CD8-positive, alpha-beta T cell (primary cell): ENCODE measurements at regions of chr17 and their contacts with region 1.

Region 1: DNA sequence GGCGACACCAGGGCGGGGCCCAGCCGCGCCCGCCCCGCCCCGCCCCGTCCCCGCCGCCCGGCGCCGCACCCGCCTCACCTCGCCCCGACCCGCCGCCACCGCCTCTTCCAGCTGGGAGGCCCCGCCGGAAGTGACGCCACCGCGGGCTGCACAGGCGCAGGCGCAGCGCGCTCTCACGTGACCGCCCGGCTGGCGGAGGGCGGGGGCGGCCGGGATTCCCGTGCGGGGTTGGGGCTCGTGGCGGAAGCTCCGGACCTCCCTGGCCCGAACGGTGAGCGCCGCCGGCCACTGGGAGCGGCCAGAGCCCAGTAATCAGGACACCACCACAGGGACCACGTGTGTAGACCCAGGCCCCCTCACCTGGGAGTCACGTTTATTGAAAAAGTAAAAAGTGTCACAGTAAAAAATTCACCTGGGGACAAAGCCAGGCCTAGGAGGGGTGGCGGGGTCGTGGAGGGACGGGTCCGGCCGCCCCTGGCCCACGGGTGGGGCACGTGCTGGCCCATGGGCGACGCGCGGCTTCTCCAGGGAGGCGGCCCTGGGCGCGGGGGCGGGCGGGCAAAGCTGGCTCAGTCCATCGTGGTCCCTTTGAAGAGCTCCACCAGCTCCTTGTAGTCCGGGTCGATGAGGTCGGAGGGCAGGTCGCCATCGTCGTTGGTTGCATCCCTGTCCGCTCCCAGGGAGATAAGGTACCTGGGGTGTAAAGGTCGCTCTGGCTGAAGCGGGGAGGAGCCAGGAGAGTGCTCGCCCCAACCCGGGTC is at the start of gene MCRIP1:
- DNase-seq: peak; percentile 80 to 97 (median 94)
- ATAC-seq: peak; percentile 74
- H3K4me3 ChIP-seq: peak within 1 kb of the TSS; percentile 71 to 80
- H3K4me3 Mint-ChIP-seq: peak within 1 kb of the TSS; percentile 94
- H3K27ac ChIP-seq: peak within 1 kb of the TSS; percentile 90 to 93
- H3K27ac Mint-ChIP-seq: peak within 1 kb of the TSS; percentile 96
- H3K4me1 ChIP-seq: peaks cover 17% of the 10 kb centered on the region
- H3K4me1 Mint-ChIP-seq: peaks cover 23% of the 10 kb centered on the region
- H3K27me3 ChIP-seq: no peaks in the 10 kb centered on the region
- H3K27me3 Mint-ChIP-seq: no peaks in the 10 kb centered on the region
- CTCF ChIP-seq: no peak
- total RNA-seq, gene MCRIP1: 32.2 to 34.0 TPM

Region 2: GRCh38 chr17:81512560-81513371 is 320.6 kb before region 1 on chr17 and contains the start of gene ACTG1:
- CTCF ChIA-PET with region 1: no interaction called
- POLR2A ChIA-PET with region 1: no interaction called
- intact Hi-C with region 1: loop called in 1 of 2 experiments (anchors 5 kb)
- DNase-seq: peak; percentile 87 to 97 (median 92)
- ATAC-seq: peak; percentile 60
- H3K4me3 ChIP-seq: peak within 1 kb of the TSS; percentile 84 to 93
- H3K4me3 Mint-ChIP-seq: peak within 1 kb of the TSS; percentile 98
- H3K27ac ChIP-seq: peak within 1 kb of the TSS; percentile 56 to 93
- H3K27ac Mint-ChIP-seq: peak within 1 kb of the TSS; percentile 98
- H3K4me1 ChIP-seq: peaks cover 49% of the 10 kb centered on the region
- H3K4me1 Mint-ChIP-seq: peaks cover 57% of the 10 kb centered on the region
- H3K27me3 ChIP-seq: no peaks in the 10 kb centered on the region
- H3K27me3 Mint-ChIP-seq: no peaks in the 10 kb centered on the region
- CTCF ChIP-seq: no peak
- total RNA-seq, gene ACTG1: 1,370 to 1,375 TPM

Region 3: DNA sequence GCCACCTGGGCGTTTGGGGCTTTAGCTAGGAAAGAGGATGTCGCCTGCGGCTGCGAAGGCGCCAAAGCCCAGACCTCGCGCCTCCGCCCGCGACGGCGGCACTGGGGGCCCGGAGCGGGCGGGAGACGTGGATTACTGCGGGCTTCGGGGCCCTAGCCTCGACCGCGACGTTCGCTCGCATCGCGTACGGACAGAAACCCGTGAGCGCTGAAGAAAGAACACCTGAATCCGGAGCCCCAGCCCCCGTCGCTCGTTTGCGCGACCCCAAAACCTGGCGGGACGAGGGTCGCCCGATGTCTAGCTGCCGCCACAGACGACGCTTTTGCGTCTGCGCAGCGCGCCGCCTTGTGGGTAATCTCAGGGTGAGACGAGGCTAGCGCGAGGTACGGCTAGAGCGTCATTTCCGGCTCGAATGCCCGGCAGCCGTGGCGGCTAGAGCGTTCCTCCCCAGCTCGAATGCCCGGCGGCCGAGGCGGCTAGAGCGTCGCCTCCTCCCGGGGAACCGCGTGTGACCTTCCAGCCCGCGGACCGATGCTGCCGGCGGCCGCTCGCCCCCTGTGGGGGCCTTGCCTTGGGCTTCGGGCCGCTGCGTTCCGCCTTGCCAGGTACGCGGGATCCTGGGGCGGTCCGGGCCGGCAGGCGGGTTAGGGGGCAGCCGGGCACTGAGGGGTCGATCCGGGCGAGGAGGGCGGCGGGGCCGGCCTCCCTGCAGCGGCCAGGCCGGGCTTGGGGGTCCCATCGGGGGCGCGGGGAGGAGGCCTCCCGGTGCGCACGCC is 130.2 kb before region 1 on chr17 and contains the start of gene MRPL12:
- CTCF ChIA-PET with region 1: no interaction called
- POLR2A ChIA-PET with region 1: no interaction called
- intact Hi-C with region 1: loop called in 1 of 2 experiments (anchors 5 kb)
- DNase-seq: peak; percentile 73 to 95 (median 90)
- ATAC-seq: peak; percentile 87
- H3K4me3 ChIP-seq: peak within 1 kb of the TSS; percentile 79 to 84
- H3K4me3 Mint-ChIP-seq: peak within 1 kb of the TSS; percentile 87
- H3K27ac ChIP-seq: peak within 1 kb of the TSS; percentile 96 to 97
- H3K27ac Mint-ChIP-seq: peak within 1 kb of the TSS; percentile 94
- H3K4me1 ChIP-seq: peaks cover 29% of the 10 kb centered on the region
- H3K4me1 Mint-ChIP-seq: peaks cover 31% of the 10 kb centered on the region
- H3K27me3 ChIP-seq: no peaks in the 10 kb centered on the region
- H3K27me3 Mint-ChIP-seq: no peaks in the 10 kb centered on the region
- CTCF ChIP-seq: no peak
- total RNA-seq, gene MRPL12: 33.2 to 36.6 TPM

Region 4: GRCh38 chr17:81890447-81891299 is 57.3 kb after region 1 on chr17:
- CTCF ChIA-PET with region 1: no interaction called
- POLR2A ChIA-PET with region 1: no interaction called
- intact Hi-C with region 1: loop called (anchors 1 kb)
- DNase-seq: peak in 3 of 9 experiments; percentile 26 to 52 (median 38)
- ATAC-seq: no peak
- H3K4me3 ChIP-seq: peak overlapping the region; percentile 51 to 53
- H3K4me3 Mint-ChIP-seq: peak overlapping the region; percentile 87
- H3K27ac ChIP-seq: peak overlapping the region; percentile 54 to 57
- H3K27ac Mint-ChIP-seq: peak overlapping the region; percentile 95
- H3K4me1 ChIP-seq: peaks cover 19% of the 10 kb centered on the region
- H3K4me1 Mint-ChIP-seq: peaks cover 23% of the 10 kb centered on the region
- H3K27me3 ChIP-seq: no peaks in the 10 kb centered on the region
- H3K27me3 Mint-ChIP-seq: no peaks in the 10 kb centered on the region
- CTCF ChIP-seq: no peak

Region 5: DNA sequence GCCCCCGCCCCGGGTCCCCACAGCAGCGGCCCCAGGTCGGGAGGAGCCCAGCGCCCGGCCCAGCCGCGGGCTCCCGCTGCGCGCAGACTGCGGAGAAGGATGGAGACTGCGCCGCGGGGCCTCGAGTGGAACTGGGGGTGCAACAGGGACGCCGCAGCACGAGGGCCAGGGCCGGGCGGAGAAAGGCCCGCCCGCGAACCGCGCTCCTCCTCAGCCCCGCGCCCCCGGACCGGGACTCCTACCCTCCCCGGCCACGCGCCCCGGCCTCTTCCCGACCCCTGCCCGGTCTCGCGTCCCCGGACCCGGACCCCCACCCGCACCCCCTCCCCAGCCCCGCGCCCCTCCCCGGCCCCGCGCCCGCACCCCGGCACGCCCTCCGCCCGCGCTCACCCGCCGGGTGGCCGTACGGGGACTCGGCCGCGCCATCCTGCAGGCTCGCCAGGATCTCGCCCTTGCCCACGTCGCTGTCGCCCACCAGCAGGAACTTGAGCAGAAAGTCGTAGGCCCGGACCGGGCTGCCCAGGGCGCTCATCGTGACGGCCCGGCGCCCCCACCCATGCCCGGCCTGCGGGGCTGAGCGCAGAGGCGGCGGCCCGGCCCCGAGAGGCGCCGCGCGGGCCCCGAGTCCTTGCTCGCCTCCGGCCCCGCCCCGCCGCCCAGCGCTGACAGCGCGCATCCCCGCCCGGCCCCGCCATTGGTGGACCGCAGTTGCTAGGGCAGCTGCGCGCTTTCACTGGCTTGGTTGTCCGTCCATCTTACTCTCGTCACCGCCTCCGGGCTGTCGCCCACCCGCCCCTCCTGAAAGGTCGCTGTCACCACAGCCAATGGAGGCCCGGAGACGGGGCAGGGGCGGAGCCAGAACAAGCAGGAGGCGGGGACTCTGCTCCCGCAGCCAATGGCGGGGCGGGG is 865.0 kb after region 1 on chr17 and contains the start of gene RAB40B:
- CTCF ChIA-PET with region 1: no interaction called
- POLR2A ChIA-PET with region 1: no interaction called
- intact Hi-C with region 1: loop called in 1 of 2 experiments (anchors 5 kb)
- DNase-seq: peak; percentile 96 to 99 (median 99)
- ATAC-seq: peak; percentile 96
- H3K4me3 ChIP-seq: peak within 1 kb of the TSS; percentile 49 to 86
- H3K4me3 Mint-ChIP-seq: peak within 1 kb of the TSS; percentile 85
- H3K27ac ChIP-seq: peak within 1 kb of the TSS in 1 of 2 experiments; percentile 33
- H3K27ac Mint-ChIP-seq: peak within 1 kb of the TSS; percentile 62
- H3K4me1 ChIP-seq: peaks cover 17% of the 10 kb centered on the region
- H3K4me1 Mint-ChIP-seq: peaks cover 18% of the 10 kb centered on the region
- H3K27me3 ChIP-seq: peaks cover 0 to 2% of the 10 kb centered on the region in 2 experiments
- H3K27me3 Mint-ChIP-seq: peaks cover 2% of the 10 kb centered on the region
- CTCF ChIP-seq: no peak
- total RNA-seq, gene RAB40B: 1.1 to 1.2 TPM